CD8-positive, alpha-beta T cell (primary cell): ENCODE measurements at regions of chr10 and their contacts with region 1.

Region 1: DNA sequence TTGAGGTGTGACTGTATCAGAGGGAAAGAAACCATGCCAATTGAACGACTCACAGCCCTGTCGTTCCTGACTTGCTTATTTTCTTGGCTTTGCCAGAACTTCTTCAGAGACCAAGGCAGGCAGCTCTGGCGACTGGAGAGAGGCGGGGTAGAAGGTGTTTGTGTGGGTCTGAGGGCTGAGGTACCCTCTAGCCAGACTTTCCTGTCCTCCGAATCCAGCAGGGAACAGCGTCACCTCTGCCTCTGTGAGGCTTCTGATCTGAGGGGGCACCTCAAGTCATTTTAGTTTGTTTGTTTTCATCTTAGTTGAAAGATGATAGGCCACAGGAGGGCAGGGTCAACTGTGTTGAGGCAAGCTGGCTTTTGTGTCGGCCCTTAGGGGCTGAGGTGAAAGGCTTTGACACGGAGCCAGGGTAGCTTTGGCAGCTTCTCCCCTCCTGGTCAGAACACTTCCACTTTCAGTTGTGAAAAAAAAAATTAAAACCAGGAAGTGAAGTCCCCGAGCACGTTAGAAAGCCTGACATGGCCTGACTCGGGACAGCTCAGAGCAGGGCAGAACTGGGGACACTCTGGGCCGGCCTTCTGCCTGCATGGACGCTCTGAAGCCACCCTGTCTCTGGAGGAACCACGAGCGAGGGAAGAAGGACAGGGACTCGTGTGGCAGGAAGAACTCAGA is 1.9 kb downstream of the ACSL5 start:
- DNase-seq: peak in 8 of 9 experiments; percentile 18 to 83 (median 47)
- ATAC-seq: peak; percentile 81
- H3K4me3 ChIP-seq: peak overlapping the region; percentile 73 to 96
- H3K4me3 Mint-ChIP-seq: peak overlapping the region; percentile 99
- H3K27ac ChIP-seq: peak overlapping the region; percentile 70 to 96
- H3K27ac Mint-ChIP-seq: peak overlapping the region; percentile 99
- H3K4me1 ChIP-seq: peaks cover 46% of the 10 kb centered on the region
- H3K4me1 Mint-ChIP-seq: peaks cover 86% of the 10 kb centered on the region
- H3K27me3 ChIP-seq: no peaks in the 10 kb centered on the region
- H3K27me3 Mint-ChIP-seq: no peaks in the 10 kb centered on the region
- CTCF ChIP-seq: no peak

Region 2: GRCh38 chr10:112183329-112184051 is 192.4 kb before region 1 on chr10 and contains the start of gene GPAM:
- CTCF ChIA-PET with region 1: no interaction called
- POLR2A ChIA-PET with region 1: interaction called, 8 read pairs
- intact Hi-C with region 1: loop called (anchors 5 kb)
- DNase-seq: peak; percentile 95 to 100 (median 99)
- ATAC-seq: peak; percentile 98
- H3K4me3 ChIP-seq: peak within 1 kb of the TSS; percentile 65 to 92
- H3K4me3 Mint-ChIP-seq: peak within 1 kb of the TSS; percentile 87
- H3K27ac ChIP-seq: peak within 1 kb of the TSS; percentile 76 to 78
- H3K27ac Mint-ChIP-seq: peak within 1 kb of the TSS; percentile 93
- H3K4me1 ChIP-seq: peaks cover 17% of the 10 kb centered on the region
- H3K4me1 Mint-ChIP-seq: peaks cover 28% of the 10 kb centered on the region
- H3K27me3 ChIP-seq: no peaks in the 10 kb centered on the region
- H3K27me3 Mint-ChIP-seq: no peaks in the 10 kb centered on the region
- CTCF ChIP-seq: no peak
- total RNA-seq, gene GPAM: 3.2 to 4.2 TPM

Region 3: GRCh38 chr10:112389147-112389822 is 13.4 kb after region 1 on chr10:
- CTCF ChIA-PET with region 1: interaction called, 5 read pairs
- POLR2A ChIA-PET with region 1: interaction called, 16 read pairs
- intact Hi-C with region 1: no loop called
- DNase-seq: peak in 5 of 9 experiments; percentile 22 to 89 (median 42)
- ATAC-seq: peak; percentile 79
- H3K4me3 ChIP-seq: no peak overlapping the region
- H3K4me3 Mint-ChIP-seq: no peak overlapping the region
- H3K27ac ChIP-seq: peak overlapping the region; percentile 11 to 74
- H3K27ac Mint-ChIP-seq: peak overlapping the region; percentile 69
- H3K4me1 ChIP-seq: peaks cover 14% of the 10 kb centered on the region
- H3K4me1 Mint-ChIP-seq: peaks cover 60% of the 10 kb centered on the region
- H3K27me3 ChIP-seq: no peaks in the 10 kb centered on the region
- H3K27me3 Mint-ChIP-seq: no peaks in the 10 kb centered on the region
- CTCF ChIP-seq: no peak

Region 4: GRCh38 chr10:112429147-112429546 is 53.3 kb after region 1 on chr10:
- CTCF ChIA-PET with region 1: interaction called, 3 read pairs
- POLR2A ChIA-PET with region 1: no interaction called
- intact Hi-C with region 1: loop called in 1 of 2 experiments (anchors 5 kb)
- DNase-seq: no peak
- ATAC-seq: no peak
- H3K4me3 ChIP-seq: no peak overlapping the region
- H3K4me3 Mint-ChIP-seq: no peak overlapping the region
- H3K27ac ChIP-seq: peak overlapping the region in 1 of 2 experiments; percentile 6
- H3K27ac Mint-ChIP-seq: peak overlapping the region; percentile 79
- H3K4me1 ChIP-seq: no peaks in the 10 kb centered on the region
- H3K4me1 Mint-ChIP-seq: no peaks in the 10 kb centered on the region
- H3K27me3 ChIP-seq: no peaks in the 10 kb centered on the region
- H3K27me3 Mint-ChIP-seq: no peaks in the 10 kb centered on the region
- CTCF ChIP-seq: no peak

Region 5: DNA sequence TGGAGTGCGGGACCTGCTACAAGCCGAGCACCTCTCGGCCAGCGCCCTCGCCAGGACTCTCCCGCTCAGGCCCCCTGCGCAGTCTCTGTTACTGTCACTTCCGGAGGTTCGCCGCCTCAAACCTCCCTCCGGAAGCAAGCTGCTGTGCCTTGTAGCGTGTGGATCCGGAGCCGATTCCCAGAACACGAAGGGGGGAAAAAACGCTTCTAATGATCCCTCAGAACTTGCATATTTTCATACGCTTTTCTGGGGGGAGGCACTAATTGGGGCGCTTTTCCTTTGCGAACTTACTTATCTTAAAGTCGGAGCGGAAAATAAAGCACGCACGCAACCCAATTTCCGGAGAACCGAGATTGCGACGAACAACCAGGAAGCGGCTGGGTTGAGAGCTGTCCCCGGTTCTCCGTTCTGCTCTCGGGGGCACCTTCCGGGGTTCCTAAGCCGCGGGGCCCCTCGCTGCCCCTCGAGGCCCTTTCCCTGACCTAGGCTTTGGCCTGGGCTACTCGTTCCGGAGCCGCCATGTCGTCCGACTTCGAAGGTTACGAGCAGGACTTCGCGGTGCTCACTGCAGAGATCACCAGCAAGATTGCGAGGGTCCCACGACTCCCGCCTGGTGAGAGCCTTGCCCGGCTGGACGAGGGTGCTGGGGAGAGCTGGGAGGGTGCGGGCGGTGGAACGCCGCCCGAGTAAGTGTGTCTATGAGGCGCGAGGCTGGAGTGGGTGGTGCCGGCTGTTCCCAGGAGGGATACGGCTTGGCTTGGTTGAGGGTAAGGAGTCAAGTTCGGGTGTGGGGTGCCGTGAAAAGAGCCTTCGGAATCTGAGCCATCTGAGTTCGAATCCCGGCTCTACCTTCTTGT is 71.2 kb after region 1 on chr10 and contains the starts of genes VTI1A and ZDHHC6:
- CTCF ChIA-PET with region 1: interaction called, 3 read pairs
- POLR2A ChIA-PET with region 1: interaction called, 13 read pairs
- intact Hi-C with region 1: loop called (anchors 1 to 5 kb)
- DNase-seq: peak; percentile 68 to 92 (median 85)
- ATAC-seq: peak; percentile 88
- H3K4me3 ChIP-seq: peak within 1 kb of the TSS; percentile 93 to 96
- H3K4me3 Mint-ChIP-seq: peak within 1 kb of the TSS; percentile 94
- H3K27ac ChIP-seq: peak within 1 kb of the TSS; percentile 91 to 92
- H3K27ac Mint-ChIP-seq: peak within 1 kb of the TSS; percentile 95
- H3K4me1 ChIP-seq: peaks cover 24% of the 10 kb centered on the region
- H3K4me1 Mint-ChIP-seq: peaks cover 66% of the 10 kb centered on the region
- H3K27me3 ChIP-seq: no peaks in the 10 kb centered on the region
- H3K27me3 Mint-ChIP-seq: no peaks in the 10 kb centered on the region
- CTCF ChIP-seq: no peak
- total RNA-seq, gene VTI1A: 59.0 to 62.7 TPM
- total RNA-seq, gene ZDHHC6: 41.4 to 41.7 TPM